ENCODE measurements at regions of chr4 and their contacts with region 1.

Region 1: GRCh38 chr4:82739316-82740179 is 59.0 kb downstream of the SCD5 start:
- DNase-seq: peak; percentile 79
- H3K4me3 Mint-ChIP-seq: no peak overlapping the region
- H3K27ac Mint-ChIP-seq: no peak overlapping the region
- H3K4me1 Mint-ChIP-seq: no peaks in the 10 kb centered on the region
- H3K27me3 Mint-ChIP-seq: peaks cover 16% of the 10 kb centered on the region

Region 2: DNA sequence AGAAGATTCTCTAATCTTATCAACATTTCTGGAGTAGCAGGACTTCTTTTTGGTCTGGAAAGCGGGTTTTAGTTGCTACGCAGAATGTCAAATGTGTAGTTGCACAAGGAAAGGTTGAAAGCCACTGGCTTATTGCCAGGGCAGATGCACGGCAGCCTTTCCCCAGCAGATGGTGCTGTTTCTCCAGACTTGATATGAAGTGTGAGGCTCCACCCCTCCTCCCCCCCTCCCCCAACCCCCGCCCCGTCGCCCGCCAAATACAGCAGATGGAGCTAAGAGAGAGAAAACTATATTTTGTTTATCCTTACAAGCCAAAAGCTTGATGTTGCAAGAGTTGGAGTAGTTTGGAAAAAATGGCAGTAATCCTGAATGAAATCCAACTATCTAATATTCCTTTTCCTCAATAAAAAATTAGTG is 277.1 kb before region 1 on chr4:
- CTCF ChIA-PET with region 1: interaction called, 23 read pairs
- POLR2A ChIA-PET with region 1: no interaction called
- DNase-seq: peak; percentile 84
- H3K4me3 Mint-ChIP-seq: no peak overlapping the region
- H3K27ac Mint-ChIP-seq: no peak overlapping the region
- H3K4me1 Mint-ChIP-seq: no peaks in the 10 kb centered on the region
- H3K27me3 Mint-ChIP-seq: no peaks in the 10 kb centered on the region

Region 3: GRCh38 chr4:82467471-82467870 is 272.1 kb before region 1 on chr4:
- CTCF ChIA-PET with region 1: interaction called, 23 read pairs
- POLR2A ChIA-PET with region 1: no interaction called
- DNase-seq: no peak
- H3K4me3 Mint-ChIP-seq: no peak overlapping the region
- H3K27ac Mint-ChIP-seq: no peak overlapping the region
- H3K4me1 Mint-ChIP-seq: no peaks in the 10 kb centered on the region
- H3K27me3 Mint-ChIP-seq: no peaks in the 10 kb centered on the region

Region 4: GRCh38 chr4:82696117-82696860 is 43.3 kb before region 1 on chr4:
- CTCF ChIA-PET with region 1: no interaction called
- POLR2A ChIA-PET with region 1: no interaction called
- DNase-seq: no peak
- H3K4me3 Mint-ChIP-seq: no peak overlapping the region
- H3K27ac Mint-ChIP-seq: no peak overlapping the region
- H3K4me1 Mint-ChIP-seq: no peaks in the 10 kb centered on the region
- H3K27me3 Mint-ChIP-seq: peaks cover 4% of the 10 kb centered on the region

Region 5: GRCh38 chr4:82721819-82722423 is 17.6 kb before region 1 on chr4:
- CTCF ChIA-PET with region 1: interaction called, 21 read pairs
- POLR2A ChIA-PET with region 1: no interaction called
- DNase-seq: peak; percentile 18
- H3K4me3 Mint-ChIP-seq: no peak overlapping the region
- H3K27ac Mint-ChIP-seq: no peak overlapping the region
- H3K4me1 Mint-ChIP-seq: no peaks in the 10 kb centered on the region
- H3K27me3 Mint-ChIP-seq: no peaks in the 10 kb centered on the region

Region 6: DNA sequence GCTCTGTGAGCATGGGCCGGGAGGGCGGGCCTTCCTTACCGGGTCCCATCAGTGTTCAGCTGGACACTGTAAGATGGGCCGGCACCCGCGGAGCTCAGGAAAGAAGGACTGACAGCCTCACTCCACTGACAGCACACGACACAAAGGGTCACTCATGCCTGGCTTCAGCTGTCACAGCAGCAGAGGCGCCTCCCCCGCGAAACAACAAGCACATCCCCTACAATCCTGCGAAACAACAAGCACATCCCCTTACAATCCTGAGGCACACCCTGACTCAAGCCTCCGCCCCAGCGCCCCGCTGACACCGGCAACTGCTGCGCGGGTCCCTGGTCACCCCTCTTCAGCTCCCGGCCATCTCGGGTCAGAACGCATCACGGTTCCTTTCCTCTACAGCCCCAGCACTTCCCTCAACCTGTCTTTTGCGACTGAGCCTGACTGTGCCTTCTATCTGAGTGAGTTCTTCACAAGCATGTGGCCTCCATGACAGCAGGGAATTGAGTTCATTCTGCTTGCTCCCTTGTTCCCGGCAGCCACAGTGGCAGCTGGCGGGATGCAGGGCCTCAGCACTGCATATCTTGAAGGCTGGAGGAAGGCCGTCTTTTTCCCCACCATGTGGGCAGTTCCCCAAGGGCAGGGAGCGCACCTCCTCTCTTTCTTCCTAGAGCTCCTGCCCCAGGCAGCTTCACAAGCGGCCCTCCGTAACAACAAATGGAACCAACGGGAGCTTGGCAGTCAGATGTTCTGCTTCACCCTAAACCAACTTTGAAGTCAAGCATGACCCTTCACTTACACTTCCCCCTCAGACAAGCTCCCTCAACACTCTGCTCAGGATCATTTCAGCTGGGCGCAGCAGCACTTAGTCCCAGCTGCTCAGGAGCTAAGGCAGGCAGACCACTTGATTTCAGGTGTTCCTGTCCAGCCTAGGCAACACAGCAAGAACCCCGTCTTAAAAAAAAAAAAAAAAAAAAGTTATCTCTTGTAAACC is 19.4 kb after region 1 on chr4:
- CTCF ChIA-PET with region 1: no interaction called
- POLR2A ChIA-PET with region 1: no interaction called
- DNase-seq: no peak
- H3K4me3 Mint-ChIP-seq: no peak overlapping the region
- H3K27ac Mint-ChIP-seq: no peak overlapping the region
- H3K4me1 Mint-ChIP-seq: no peaks in the 10 kb centered on the region
- H3K27me3 Mint-ChIP-seq: peaks cover 23% of the 10 kb centered on the region

Region 7: DNA sequence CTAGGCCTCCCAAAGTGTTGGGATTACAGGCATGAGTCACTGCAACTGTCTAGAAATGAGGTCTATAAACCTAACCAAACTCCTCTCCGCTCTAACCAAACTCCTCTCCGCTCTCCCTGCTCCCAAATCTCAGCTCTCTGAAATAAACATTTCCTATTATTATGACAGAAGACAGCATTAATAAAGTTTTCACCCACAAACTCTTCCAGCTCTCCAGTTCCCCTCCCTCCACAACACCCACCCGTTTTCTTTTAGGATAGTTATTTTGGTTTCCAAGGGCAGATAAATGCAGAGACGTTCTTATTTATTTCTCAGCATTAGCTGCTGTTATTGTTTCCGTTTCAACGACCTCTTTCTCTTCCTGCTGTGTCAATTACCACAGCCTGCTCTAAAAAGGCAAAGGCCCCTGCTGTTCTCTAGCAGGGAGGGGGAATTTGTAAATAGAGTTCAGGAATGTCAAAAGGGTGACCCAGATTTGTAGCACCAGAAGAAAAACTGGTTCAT is 72.3 kb after region 1 on chr4:
- CTCF ChIA-PET with region 1: no interaction called
- POLR2A ChIA-PET with region 1: no interaction called
- DNase-seq: no peak
- H3K4me3 Mint-ChIP-seq: no peak overlapping the region
- H3K27ac Mint-ChIP-seq: no peak overlapping the region
- H3K4me1 Mint-ChIP-seq: peaks cover 4% of the 10 kb centered on the region
- H3K27me3 Mint-ChIP-seq: peaks cover 6% of the 10 kb centered on the region

Region 8: GRCh38 chr4:83490876-83491450 is 751.4 kb after region 1 on chr4:
- CTCF ChIA-PET with region 1: no interaction called
- POLR2A ChIA-PET with region 1: no interaction called
- DNase-seq: no peak
- H3K4me3 Mint-ChIP-seq: no peak overlapping the region
- H3K27ac Mint-ChIP-seq: no peak overlapping the region
- H3K4me1 Mint-ChIP-seq: peaks cover 4% of the 10 kb centered on the region
- H3K27me3 Mint-ChIP-seq: peaks cover 2% of the 10 kb centered on the region

Measured in activated CD4-positive, alpha-beta memory T cell treated with anti-CD3 and anti-CD28 coated beads, Interleukin-2, amount 10 ng/mL, durations not matched to agents 7 days and 5 days (primary cell).